Naive thymus-derived CD4-positive, alpha-beta T cell (primary cell): ENCODE measurements at regions of chr11 and their contacts with region 1.

Region 1: DNA sequence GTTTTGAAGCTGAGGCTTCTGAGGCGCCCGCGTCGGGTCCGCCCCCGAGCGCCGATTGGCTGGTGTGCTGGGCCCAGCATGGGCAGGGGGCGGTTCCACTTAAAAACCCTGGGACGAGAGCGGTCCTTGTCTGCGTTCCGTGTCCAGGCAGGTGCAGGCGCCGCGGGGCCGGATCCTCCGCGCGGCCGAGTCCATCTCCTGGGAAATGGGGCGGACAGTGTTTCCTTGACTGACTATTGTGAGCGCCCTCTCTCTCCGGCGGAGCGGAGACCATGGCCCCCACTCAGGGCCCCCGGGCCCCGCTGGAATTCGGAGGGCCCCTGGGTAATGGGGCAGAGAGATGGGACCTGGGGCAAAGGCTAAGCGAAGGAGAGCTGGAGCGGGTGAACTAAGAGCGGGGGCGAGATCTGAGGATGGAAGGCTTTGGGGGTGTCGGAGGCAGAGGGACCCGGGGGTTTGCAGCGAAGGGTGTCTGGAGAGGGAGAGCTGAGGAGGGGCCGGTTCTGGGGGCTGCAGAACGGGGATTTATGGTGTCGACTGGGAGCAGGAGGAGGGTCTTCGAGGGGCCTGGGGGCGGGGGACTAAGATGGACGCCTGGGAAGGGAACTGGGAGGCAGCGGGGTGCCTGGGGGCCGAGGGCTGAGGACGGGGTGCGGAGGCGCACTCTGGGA is at the start of gene TM7SF2:
- DNase-seq: peak; percentile 84 to 94 (median 92)
- ATAC-seq: peak; percentile 82
- H3K4me3 ChIP-seq: peak within 1 kb of the TSS; percentile 83
- H3K4me3 Mint-ChIP-seq: peak within 1 kb of the TSS; percentile 85 to 97 (median 89)
- H3K27ac ChIP-seq: peak within 1 kb of the TSS; percentile 74
- H3K27ac Mint-ChIP-seq: peak within 1 kb of the TSS; percentile 80 to 100 (median 90)
- H3K4me1 ChIP-seq: peaks cover 33 to 36% of the 10 kb centered on the region in 2 donors
- H3K4me1 Mint-ChIP-seq: peaks cover 18 to 52% (median 38%) of the 10 kb centered on the region in 7 donors
- H3K27me3 ChIP-seq: no peaks in the 10 kb centered on the region
- H3K27me3 Mint-ChIP-seq: no peaks in the 10 kb centered on the region
- total RNA-seq, gene TM7SF2: 21.6 to 37.8 (median 30.8) TPM

Region 2: DNA sequence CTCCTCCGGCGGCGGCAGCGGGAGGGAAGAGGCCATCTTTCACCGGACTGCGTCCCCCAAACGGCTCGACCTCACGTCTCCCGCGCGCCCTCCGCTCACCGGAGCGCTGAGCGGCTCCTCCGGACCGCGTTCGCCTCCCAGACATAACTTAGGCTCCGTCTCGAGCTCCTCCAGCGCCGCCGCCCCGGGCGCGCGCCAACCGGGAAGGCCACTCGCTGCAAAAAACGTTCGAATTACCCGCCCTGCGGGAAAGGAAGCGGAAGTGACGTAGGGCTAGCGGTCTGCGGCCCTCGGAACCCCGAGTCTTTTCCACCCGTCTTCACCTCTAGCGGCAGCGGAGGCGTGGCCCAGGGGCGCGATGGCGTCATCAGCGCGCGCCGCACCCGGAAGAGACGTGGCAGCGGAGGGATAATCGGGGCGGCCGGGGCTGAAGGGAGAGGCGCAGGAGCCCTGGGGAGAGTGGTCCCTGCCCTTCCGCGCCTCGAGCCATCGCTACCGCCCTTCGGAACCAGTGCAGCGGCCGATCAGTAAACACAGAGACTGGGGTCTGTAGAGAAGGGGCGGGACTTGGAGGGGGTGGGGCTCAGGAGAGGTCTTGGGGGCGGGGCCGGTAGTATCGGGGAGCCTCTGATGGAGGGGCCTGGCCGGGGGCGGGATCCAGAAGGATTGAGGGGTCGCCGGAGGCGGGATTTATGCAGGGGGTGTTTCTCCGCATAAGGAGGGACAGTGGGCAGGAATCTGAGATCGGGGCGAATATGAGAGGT is 27.9 kb before region 1 on chr11 and contains the starts of genes CDCA5 and ZFPL1:
- CTCF ChIA-PET with region 1: interaction called, 3 read pairs
- POLR2A ChIA-PET with region 1: interaction called, 11 read pairs
- intact Hi-C with region 1: loop called (anchors 1 kb)
- DNase-seq: peak; percentile 94 to 98 (median 97)
- ATAC-seq: peak; percentile 96
- H3K4me3 ChIP-seq: peak within 1 kb of the TSS; percentile 61
- H3K4me3 Mint-ChIP-seq: peak within 1 kb of the TSS; percentile 88 to 99 (median 93)
- H3K27ac ChIP-seq: peak within 1 kb of the TSS; percentile 86
- H3K27ac Mint-ChIP-seq: peak within 1 kb of the TSS; percentile 94 to 99 (median 97)
- H3K4me1 ChIP-seq: peaks cover 13 to 14% of the 10 kb centered on the region in 2 donors
- H3K4me1 Mint-ChIP-seq: peaks cover 20 to 49% (median 27%) of the 10 kb centered on the region in 7 donors
- H3K27me3 ChIP-seq: no peaks in the 10 kb centered on the region
- H3K27me3 Mint-ChIP-seq: peaks cover 0 to 4% (median 0%) of the 10 kb centered on the region in 5 donors
- total RNA-seq, gene CDCA5: 0.56 to 68.1 (median 0.81) TPM
- total RNA-seq, gene ZFPL1: 29.9 to 53.0 (median 49.3) TPM

Region 3: DNA sequence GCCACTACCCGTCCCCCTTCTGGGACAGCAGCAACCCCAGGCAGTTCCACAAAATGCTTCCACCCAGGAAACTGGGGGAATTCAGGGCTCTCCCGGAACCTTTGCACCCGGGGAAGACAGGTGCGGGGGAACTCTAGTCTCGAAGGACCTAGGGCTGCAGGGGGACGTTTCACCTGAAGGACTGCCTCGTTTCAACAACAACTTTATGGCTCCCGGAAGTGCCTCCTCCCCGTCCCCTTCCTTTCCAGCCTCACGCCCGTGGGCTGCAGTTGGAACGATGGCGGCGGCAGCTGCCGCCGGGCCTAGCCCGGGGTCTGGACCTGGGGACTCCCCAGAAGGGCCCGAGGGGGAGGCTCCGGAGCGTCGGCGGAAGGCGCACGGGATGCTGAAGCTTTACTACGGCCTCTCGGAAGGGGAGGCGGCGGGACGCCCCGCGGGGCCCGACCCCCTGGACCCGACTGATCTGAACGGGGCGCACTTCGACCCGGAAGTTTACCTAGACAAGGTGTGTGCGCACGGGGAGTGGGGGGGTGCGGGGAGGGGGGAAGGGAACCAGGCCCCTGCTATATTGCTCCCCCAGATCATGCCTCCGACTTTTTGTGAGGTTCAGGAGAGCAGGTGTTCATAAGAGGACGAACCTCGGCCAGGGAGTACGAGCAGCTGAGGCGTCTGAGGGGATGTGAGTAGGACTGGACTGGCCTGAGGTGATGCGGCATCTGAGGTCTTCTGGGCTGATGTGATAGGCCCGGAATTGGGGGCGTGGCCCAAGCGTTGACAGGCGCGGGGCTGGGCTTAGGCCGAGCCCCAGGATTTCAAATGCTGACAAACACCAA is 15.7 kb before region 1 on chr11 and contains the start of gene VPS51:
- CTCF ChIA-PET with region 1: interaction called, 20 read pairs
- POLR2A ChIA-PET with region 1: interaction called, 75 read pairs
- intact Hi-C with region 1: loop called (anchors 1 kb)
- DNase-seq: peak; percentile 71 to 92 (median 87)
- ATAC-seq: peak; percentile 93
- H3K4me3 ChIP-seq: peak within 1 kb of the TSS; percentile 92
- H3K4me3 Mint-ChIP-seq: peak within 1 kb of the TSS; percentile 83 to 97 (median 94)
- H3K27ac ChIP-seq: peak within 1 kb of the TSS; percentile 88
- H3K27ac Mint-ChIP-seq: peak within 1 kb of the TSS; percentile 89 to 98 (median 97)
- H3K4me1 ChIP-seq: peaks cover 9 to 15% of the 10 kb centered on the region in 2 donors
- H3K4me1 Mint-ChIP-seq: peaks cover 8 to 28% (median 19%) of the 10 kb centered on the region in 7 donors
- H3K27me3 ChIP-seq: no peaks in the 10 kb centered on the region
- H3K27me3 Mint-ChIP-seq: no peaks in the 10 kb centered on the region
- total RNA-seq, gene VPS51: 159 to 269 (median 256) TPM

Region 4: DNA sequence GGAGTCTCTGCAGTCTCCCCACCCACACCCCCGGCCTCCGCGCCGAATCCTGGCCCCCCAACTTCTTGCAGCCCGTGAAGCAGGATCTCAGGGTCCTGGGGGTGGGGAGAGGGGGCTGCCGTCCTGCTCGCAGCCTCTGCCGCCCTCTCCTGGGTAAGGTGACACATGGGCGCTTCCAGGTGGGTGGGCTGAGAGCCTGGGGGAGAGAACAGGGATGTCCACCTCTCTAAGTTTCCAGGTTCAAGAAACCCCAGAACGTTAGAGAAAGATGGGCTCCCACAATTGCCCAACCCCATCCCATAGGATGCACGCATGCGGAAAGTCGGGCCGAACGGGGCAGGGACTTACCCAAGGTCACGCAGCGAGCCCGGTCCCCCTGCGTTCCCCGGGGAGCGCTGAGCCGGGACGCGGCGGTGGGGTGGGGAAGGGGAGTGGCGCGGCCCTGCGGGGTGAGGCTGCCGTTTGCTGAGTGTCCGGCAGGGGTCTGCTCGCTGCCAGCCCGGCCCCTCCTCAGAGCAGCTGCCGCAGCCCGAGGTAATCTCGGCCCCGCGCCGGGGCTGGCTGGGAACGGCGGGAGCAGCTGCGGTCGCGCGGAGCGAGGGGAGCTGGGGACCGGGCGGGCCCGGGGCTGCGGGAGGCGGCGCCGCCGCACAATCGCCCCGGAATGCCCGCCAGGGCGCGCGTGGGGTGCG is 69.1 kb after region 1 on chr11:
- CTCF ChIA-PET with region 1: interaction called, 3 read pairs
- POLR2A ChIA-PET with region 1: interaction called, 6 read pairs
- intact Hi-C with region 1: loop called (anchors 1 to 2 kb)
- DNase-seq: peak in 8 of 9 donors; percentile 41 to 71 (median 45)
- ATAC-seq: peak; percentile 85
- H3K4me3 ChIP-seq: peak overlapping the region; percentile 67
- H3K4me3 Mint-ChIP-seq: peak overlapping the region; percentile 80 to 94 (median 90)
- H3K27ac ChIP-seq: peak overlapping the region; percentile 93
- H3K27ac Mint-ChIP-seq: peak overlapping the region; percentile 36 to 91 (median 84)
- H3K4me1 ChIP-seq: peaks cover 6 to 8% of the 10 kb centered on the region in 2 donors
- H3K4me1 Mint-ChIP-seq: peaks cover 7 to 30% (median 22%) of the 10 kb centered on the region in 7 donors
- H3K27me3 ChIP-seq: no peaks in the 10 kb centered on the region
- H3K27me3 Mint-ChIP-seq: peaks cover 0 to 22% (median 0%) of the 10 kb centered on the region in 5 donors

Region 5: GRCh38 chr11:65314501-65315203 is 202.8 kb after region 1 on chr11 and contains the start of gene CDC42EP2:
- CTCF ChIA-PET with region 1: no interaction called
- POLR2A ChIA-PET with region 1: no interaction called
- intact Hi-C with region 1: loop called (anchors 1 to 10 kb)
- DNase-seq: peak; percentile 42 to 87 (median 56)
- ATAC-seq: peak; percentile 94
- H3K4me3 ChIP-seq: peak within 1 kb of the TSS; percentile 68
- H3K4me3 Mint-ChIP-seq: peak within 1 kb of the TSS; percentile 47 to 86 (median 76)
- H3K27ac ChIP-seq: peak within 1 kb of the TSS; percentile 59
- H3K27ac Mint-ChIP-seq: peak within 1 kb of the TSS in 3 of 9 donors; percentile 32 to 40 (median 38)
- H3K4me1 ChIP-seq: peaks cover 0 to 11% of the 10 kb centered on the region in 2 donors
- H3K4me1 Mint-ChIP-seq: peaks cover 0 to 13% (median 5%) of the 10 kb centered on the region in 7 donors
- H3K27me3 ChIP-seq: no peaks in the 10 kb centered on the region
- H3K27me3 Mint-ChIP-seq: peaks cover 0 to 12% (median 0%) of the 10 kb centered on the region in 5 donors
- total RNA-seq, gene CDC42EP2: 0.58 to 1.8 (median 0.89) TPM

Region 6: DNA sequence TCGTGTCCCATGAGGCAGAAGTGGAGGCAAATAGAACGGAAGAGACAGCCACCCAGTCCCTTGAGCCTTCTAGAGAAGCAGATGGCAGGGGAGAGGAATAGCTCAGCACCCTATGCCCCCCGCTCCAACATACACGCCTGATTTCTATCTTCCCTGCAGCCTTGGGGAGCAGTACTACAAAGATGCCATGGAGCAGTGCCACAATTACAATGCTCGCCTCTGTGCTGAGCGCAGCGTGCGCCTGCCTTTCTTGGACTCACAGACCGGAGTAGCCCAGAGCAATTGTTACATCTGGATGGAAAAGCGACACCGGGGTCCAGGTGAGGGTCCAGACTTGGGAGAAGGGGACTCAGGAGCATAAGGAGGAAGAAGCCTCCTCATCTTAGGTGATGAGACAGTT is 228.3 kb after region 1 on chr11:
- CTCF ChIA-PET with region 1: no interaction called
- POLR2A ChIA-PET with region 1: no interaction called
- intact Hi-C with region 1: no loop called
- DNase-seq: no peak
- ATAC-seq: no peak
- H3K4me3 ChIP-seq: no peak overlapping the region
- H3K4me3 Mint-ChIP-seq: no peak overlapping the region
- H3K27ac ChIP-seq: no peak overlapping the region
- H3K27ac Mint-ChIP-seq: peak overlapping the region in 6 of 9 donors; percentile 12 to 82 (median 50)
- H3K4me1 ChIP-seq: peaks cover 1 to 19% of the 10 kb centered on the region in 2 donors
- H3K4me1 Mint-ChIP-seq: peaks cover 24 to 43% (median 30%) of the 10 kb centered on the region in 7 donors
- H3K27me3 ChIP-seq: no peaks in the 10 kb centered on the region
- H3K27me3 Mint-ChIP-seq: no peaks in the 10 kb centered on the region

Region 7: DNA sequence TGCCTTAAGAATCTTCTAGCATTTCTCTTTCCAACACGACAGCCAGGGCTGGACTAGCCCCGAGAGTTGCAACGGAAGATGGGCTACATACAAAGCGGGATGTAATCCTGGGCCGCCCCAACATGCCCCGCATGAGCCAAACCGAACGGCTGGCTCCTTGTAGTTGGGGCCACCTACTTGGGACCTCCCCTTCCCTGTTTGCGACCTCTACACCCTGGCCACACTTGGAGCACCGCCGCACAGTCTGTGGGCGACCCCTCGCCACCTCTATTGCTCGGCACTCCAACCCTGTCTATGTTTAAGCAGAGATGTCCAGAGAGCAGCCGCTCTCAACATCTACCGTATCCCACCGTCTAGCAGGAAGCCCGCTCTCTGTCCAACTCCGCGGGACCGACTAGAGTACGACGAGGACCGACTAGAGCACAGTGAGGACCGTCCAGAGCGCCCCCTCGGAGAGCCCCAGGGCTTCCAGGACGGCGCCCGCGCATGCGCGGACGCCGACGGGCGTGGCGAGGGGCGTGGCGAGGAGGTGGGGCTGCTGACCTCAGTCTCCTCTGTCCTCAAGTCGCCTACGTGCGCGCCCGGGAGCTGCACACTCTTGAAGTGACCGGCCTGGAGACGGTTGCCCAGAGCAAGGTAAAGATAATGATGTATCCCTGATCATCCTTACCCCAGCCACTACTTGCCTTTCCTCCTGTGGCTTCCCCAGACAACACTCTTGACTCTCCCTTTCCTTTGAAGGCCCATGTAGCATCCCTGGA is 343.0 kb after region 1 on chr11:
- CTCF ChIA-PET with region 1: no interaction called
- POLR2A ChIA-PET with region 1: no interaction called
- intact Hi-C with region 1: no loop called
- DNase-seq: peak; percentile 48 to 89 (median 61)
- ATAC-seq: peak; percentile 92
- H3K4me3 ChIP-seq: peak overlapping the region; percentile 89
- H3K4me3 Mint-ChIP-seq: peak overlapping the region; percentile 86 to 95 (median 88)
- H3K27ac ChIP-seq: peak overlapping the region; percentile 70
- H3K27ac Mint-ChIP-seq: peak overlapping the region; percentile 14 to 92 (median 85)
- H3K4me1 ChIP-seq: peaks cover 5% of the 10 kb centered on the region in 2 donors
- H3K4me1 Mint-ChIP-seq: peaks cover 14 to 37% (median 21%) of the 10 kb centered on the region in 7 donors
- H3K27me3 ChIP-seq: no peaks in the 10 kb centered on the region
- H3K27me3 Mint-ChIP-seq: no peaks in the 10 kb centered on the region

Region 8: DNA sequence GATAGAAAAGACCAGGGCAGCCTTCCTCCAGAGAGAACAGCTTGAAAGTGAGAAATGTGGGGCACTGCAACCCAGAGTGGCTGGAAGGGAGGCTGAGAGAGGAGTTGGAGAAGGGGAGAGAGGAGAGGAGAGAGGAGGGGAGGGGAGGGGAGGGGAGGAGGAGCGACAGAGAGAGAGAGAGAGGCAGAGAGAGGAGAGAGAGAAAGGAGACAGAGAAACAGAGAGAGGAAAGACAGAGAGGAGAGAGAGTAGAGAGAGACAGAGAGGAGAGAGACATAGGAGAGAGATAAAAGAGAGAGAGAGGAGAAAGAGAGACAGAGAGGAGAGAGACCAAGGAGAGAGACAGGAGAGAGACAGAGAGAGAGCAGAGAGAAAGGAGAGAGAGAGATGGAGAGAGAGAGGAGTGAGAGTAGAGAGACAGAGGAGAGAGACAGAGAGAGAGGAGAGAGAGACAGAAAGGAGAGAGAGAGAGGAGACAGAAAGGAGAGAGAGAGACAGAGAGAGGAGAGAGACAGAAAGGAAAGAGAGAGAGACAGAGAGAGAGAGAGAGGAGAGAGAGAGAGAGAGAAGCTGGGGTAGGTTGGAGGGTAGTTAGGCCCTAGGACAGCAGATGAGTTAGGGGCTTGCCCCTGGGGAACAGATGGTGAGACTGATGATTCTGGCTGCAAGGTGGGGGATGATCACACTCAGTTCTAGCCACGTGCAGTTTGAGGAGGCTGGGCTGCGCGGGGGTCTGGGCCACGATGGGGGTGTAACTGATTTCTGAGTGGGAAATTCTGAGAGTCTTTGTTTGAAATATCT is 404.5 kb after region 1 on chr11:
- CTCF ChIA-PET with region 1: no interaction called
- POLR2A ChIA-PET with region 1: no interaction called
- intact Hi-C with region 1: loop called in 1 of 2 experiments (anchors 5 kb)
- DNase-seq: peak in 1 of 9 donors; percentile 13
- ATAC-seq: peak; percentile 26
- H3K4me3 ChIP-seq: no peak overlapping the region
- H3K4me3 Mint-ChIP-seq: peak overlapping the region in 1 of 10 donors; percentile 48
- H3K27ac ChIP-seq: no peak overlapping the region
- H3K27ac Mint-ChIP-seq: peak overlapping the region; percentile 13 to 92 (median 68)
- H3K4me1 ChIP-seq: no peaks in the 10 kb centered on the region
- H3K4me1 Mint-ChIP-seq: peaks cover 9 to 11% (median 11%) of the 10 kb centered on the region in 7 donors
- H3K27me3 ChIP-seq: no peaks in the 10 kb centered on the region
- H3K27me3 Mint-ChIP-seq: no peaks in the 10 kb centered on the region